ENCODE measurements at regions of chr1 and their contacts with region 1.

Region 1: GRCh38 chr1:219173758-219174588 is at the start of gene LYPLAL1:
- DNase-seq: peak; percentile 84 to 90
- H3K4me3 ChIP-seq: peak within 1 kb of the TSS; percentile 75
- H3K4me3 Mint-ChIP-seq: peak within 1 kb of the TSS; percentile 96
- H3K27ac Mint-ChIP-seq: peak within 1 kb of the TSS; percentile 94
- H3K4me1 ChIP-seq: 0 out of 2 replicates have a peak, but pooled peaks cover 4% of the 10 kb centered on the region
- H3K4me1 Mint-ChIP-seq: peaks cover 23% of the 10 kb centered on the region
- H3K27me3 ChIP-seq: no peaks in the 10 kb centered on the region
- H3K27me3 Mint-ChIP-seq: no peaks in the 10 kb centered on the region
- CTCF ChIP-seq: peak in 1 of 2 experiments; percentile 26
- total RNA-seq, gene LYPLAL1: 20.4 and 27.1 TPM in 2 replicates

Region 2: DNA sequence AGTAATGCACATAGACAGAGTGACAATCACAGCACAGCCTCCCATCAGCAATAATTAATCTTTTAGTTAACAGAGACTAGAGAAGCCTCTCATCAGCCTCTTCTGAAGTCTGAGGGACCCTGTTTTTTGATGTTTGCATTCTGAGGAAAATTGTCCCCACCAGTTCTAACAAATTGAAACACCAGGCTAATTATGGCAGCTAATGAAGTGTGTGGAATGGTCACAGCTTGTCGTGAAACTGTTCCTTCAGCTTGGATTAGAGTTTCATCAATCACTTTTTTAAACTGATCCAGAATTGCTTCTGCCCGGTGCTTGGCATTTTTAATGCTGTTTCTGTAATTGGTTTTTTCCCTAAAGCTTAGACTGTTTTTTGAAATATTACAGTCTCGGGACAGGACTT is 1334.8 kb before region 1 on chr1:
- CTCF ChIA-PET with region 1: no interaction called
- POLR2A ChIA-PET with region 1: no interaction called
- intact Hi-C with region 1: no loop called
- DNase-seq: no peak
- H3K4me3 ChIP-seq: no peak overlapping the region
- H3K4me3 Mint-ChIP-seq: no peak overlapping the region
- H3K27ac Mint-ChIP-seq: no peak overlapping the region
- H3K4me1 ChIP-seq: no peaks in the 10 kb centered on the region
- H3K4me1 Mint-ChIP-seq: no peaks in the 10 kb centered on the region
- H3K27me3 ChIP-seq: no peaks in the 10 kb centered on the region
- H3K27me3 Mint-ChIP-seq: no peaks in the 10 kb centered on the region
- CTCF ChIP-seq: no peak

Region 3: GRCh38 chr1:219317762-219318353 is 143.9 kb after region 1 on chr1:
- CTCF ChIA-PET with region 1: no interaction called
- POLR2A ChIA-PET with region 1: no interaction called
- intact Hi-C with region 1: loop called (anchors 10 kb)
- DNase-seq: peak; percentile 16 to 39
- H3K4me3 ChIP-seq: no peak overlapping the region
- H3K4me3 Mint-ChIP-seq: no peak overlapping the region
- H3K27ac Mint-ChIP-seq: no peak overlapping the region
- H3K4me1 ChIP-seq: peaks cover 4% of the 10 kb centered on the region; the same call in 1 of the 2 replicates
- H3K4me1 Mint-ChIP-seq: no peaks in the 10 kb centered on the region
- H3K27me3 ChIP-seq: no peaks in the 10 kb centered on the region
- H3K27me3 Mint-ChIP-seq: no peaks in the 10 kb centered on the region
- CTCF ChIP-seq: peak in 1 of 2 experiments; percentile 59